A549 (cell line): ENCODE measurements at regions of chr15 and their contacts with region 1.

Region 1: GRCh38 chr15:73305331-73306211 is 63.2 kb downstream of the HCN4 start:
- DNase-seq: peak; percentile 81 to 86
- ATAC-seq: peak; percentile 91 to 95
- H3K4me3 ChIP-seq: no peak overlapping the region
- H3K27ac ChIP-seq: no peak overlapping the region
- H3K4me1 ChIP-seq: no peaks in the 10 kb centered on the region
- CTCF ChIP-seq: peak; percentile 83
- EP300 ChIP-seq: no peak
- POLR2A ChIP-seq: no peak
- RAD21 ChIP-seq: peak; percentile 89 to 95

Region 2: GRCh38 chr15:73318463-73319351 is 13.1 kb after region 1 on chr15:
- CTCF ChIA-PET with region 1: interaction called, 27 read pairs
- POLR2A ChIA-PET with region 1: no interaction called
- DNase-seq: no peak
- ATAC-seq: peak in 1 of 2 experiments; percentile 21; a peak in 4 of 6 replicates
- H3K4me3 ChIP-seq: no peak overlapping the region
- H3K27ac ChIP-seq: no peak overlapping the region
- H3K4me1 ChIP-seq: no peaks in the 10 kb centered on the region
- CTCF ChIP-seq: no peak
- EP300 ChIP-seq: no peak
- POLR2A ChIP-seq: no peak
- RAD21 ChIP-seq: no peak

Region 3: DNA sequence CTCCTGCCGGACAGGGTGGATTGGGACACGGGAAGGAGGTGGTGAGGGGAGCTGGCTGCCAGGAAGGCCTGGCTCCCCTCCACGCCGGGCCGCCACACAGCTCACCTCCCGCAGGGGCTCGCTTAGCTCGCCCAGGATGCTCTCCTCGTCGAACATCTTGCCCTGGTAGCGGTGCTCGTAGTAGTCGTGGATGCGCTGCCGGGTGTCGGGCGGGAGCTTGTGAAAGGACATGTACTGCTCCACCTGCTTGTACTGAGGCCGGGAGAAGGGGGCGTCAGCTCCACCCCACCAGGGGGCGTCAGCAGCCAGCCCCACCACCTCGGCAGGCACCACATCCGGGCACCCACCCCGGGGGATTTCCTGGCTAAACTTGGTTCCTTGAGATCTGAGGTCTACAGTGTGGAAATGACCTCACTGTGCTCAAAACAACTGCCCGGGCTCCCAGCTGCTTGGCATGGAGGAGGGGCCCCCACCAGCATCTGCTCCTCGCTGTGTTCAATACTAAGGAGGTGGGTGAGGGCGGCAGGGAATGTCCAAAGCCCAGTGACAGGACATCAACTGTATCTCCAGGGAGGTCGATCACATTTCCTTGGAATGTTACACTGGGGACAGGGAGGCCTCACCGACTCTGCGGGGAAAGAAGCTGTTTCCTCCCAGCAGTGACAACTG is 19.8 kb after region 1 on chr15:
- CTCF ChIA-PET with region 1: interaction called, 10 read pairs
- POLR2A ChIA-PET with region 1: no interaction called
- DNase-seq: peak in 1 of 2 experiments; percentile 25
- ATAC-seq: peak in 1 of 2 experiments; percentile 46; a peak in 3 of 6 replicates
- H3K4me3 ChIP-seq: no peak overlapping the region
- H3K27ac ChIP-seq: no peak overlapping the region
- H3K4me1 ChIP-seq: no peaks in the 10 kb centered on the region
- CTCF ChIP-seq: no peak; the same call in 2 of the 3 replicates
- EP300 ChIP-seq: no peak
- POLR2A ChIP-seq: no peak
- RAD21 ChIP-seq: peak; percentile 26 to 30; a peak in 2 of 5 replicates